ENCODE measurements at regions of chr12 and their contacts with region 1.

Region 1: GRCh38 chr12:116708826-116709756 is 28.8 kb downstream of the SPRING1 start:
- DNase-seq: peak; percentile 57
- H3K4me3 Mint-ChIP-seq: no peak overlapping the region
- H3K27ac Mint-ChIP-seq: no peak overlapping the region
- H3K4me1 Mint-ChIP-seq: peaks cover 8% of the 10 kb centered on the region
- H3K27me3 Mint-ChIP-seq: peaks cover 15% of the 10 kb centered on the region

Region 2: GRCh38 chr12:116142936-116143898 is 565.9 kb before region 1 on chr12:
- CTCF ChIA-PET with region 1: interaction called, 12 read pairs
- POLR2A ChIA-PET with region 1: no interaction called
- DNase-seq: no peak
- H3K4me3 Mint-ChIP-seq: no peak overlapping the region
- H3K27ac Mint-ChIP-seq: peak overlapping the region; percentile 34
- H3K4me1 Mint-ChIP-seq: peaks cover 45% of the 10 kb centered on the region
- H3K27me3 Mint-ChIP-seq: no peaks in the 10 kb centered on the region

Region 3: GRCh38 chr12:116635487-116635886 is 73.6 kb before region 1 on chr12:
- CTCF ChIA-PET with region 1: no interaction called
- POLR2A ChIA-PET with region 1: no interaction called
- DNase-seq: no peak
- H3K4me3 Mint-ChIP-seq: no peak overlapping the region
- H3K27ac Mint-ChIP-seq: no peak overlapping the region
- H3K4me1 Mint-ChIP-seq: no peaks in the 10 kb centered on the region
- H3K27me3 Mint-ChIP-seq: peaks cover 34% of the 10 kb centered on the region

Region 4: DNA sequence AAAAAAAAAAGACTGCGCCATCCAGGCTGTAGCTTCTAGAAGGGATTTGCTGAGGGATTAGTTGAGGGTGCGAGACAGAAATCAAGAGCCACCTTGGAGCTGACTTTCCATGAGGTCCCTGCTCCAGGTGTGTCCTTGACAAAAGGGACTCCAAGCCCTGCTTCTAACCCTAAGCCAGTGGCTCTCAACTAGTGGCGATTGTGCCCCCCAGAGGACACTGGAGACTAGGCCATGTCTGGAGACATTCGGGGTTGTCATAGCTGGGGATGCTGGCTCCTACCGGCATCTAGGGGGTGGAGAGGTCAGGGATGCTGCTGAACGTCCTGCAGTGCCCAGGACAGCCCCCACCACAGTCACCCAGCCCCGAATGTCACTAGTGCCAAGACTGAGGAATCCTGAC is 11.8 kb before region 1 on chr12:
- CTCF ChIA-PET with region 1: interaction called, 12 read pairs
- POLR2A ChIA-PET with region 1: no interaction called
- DNase-seq: peak; percentile 22
- H3K4me3 Mint-ChIP-seq: no peak overlapping the region
- H3K27ac Mint-ChIP-seq: no peak overlapping the region
- H3K4me1 Mint-ChIP-seq: peaks cover 14% of the 10 kb centered on the region
- H3K27me3 Mint-ChIP-seq: peaks cover 27% of the 10 kb centered on the region